Activated T-helper 2 cell treated with anti-CD3 and anti-CD28 coated beads, Interferon-gamma antibody, Interleukin-2, Interleukin-4, amounts not matched to agents 10 μg/mL and 5 μg/mL and 100 μg/mL, durations not matched to agents 14 hours and 24 hours and 36 hours (primary cell): ENCODE measurements at regions of chr3 and their contacts with region 1.

Region 1: GRCh38 chr3:189967254-189967865 is 153.3 kb downstream of the P3H2 start:
- DNase-seq: no peak
- H3K4me3 Mint-ChIP-seq: no peak overlapping the region
- H3K27ac Mint-ChIP-seq: no peak overlapping the region
- H3K4me1 Mint-ChIP-seq: peaks cover 6% of the 10 kb centered on the region
- H3K27me3 Mint-ChIP-seq: peaks cover 19% of the 10 kb centered on the region

Region 2: DNA sequence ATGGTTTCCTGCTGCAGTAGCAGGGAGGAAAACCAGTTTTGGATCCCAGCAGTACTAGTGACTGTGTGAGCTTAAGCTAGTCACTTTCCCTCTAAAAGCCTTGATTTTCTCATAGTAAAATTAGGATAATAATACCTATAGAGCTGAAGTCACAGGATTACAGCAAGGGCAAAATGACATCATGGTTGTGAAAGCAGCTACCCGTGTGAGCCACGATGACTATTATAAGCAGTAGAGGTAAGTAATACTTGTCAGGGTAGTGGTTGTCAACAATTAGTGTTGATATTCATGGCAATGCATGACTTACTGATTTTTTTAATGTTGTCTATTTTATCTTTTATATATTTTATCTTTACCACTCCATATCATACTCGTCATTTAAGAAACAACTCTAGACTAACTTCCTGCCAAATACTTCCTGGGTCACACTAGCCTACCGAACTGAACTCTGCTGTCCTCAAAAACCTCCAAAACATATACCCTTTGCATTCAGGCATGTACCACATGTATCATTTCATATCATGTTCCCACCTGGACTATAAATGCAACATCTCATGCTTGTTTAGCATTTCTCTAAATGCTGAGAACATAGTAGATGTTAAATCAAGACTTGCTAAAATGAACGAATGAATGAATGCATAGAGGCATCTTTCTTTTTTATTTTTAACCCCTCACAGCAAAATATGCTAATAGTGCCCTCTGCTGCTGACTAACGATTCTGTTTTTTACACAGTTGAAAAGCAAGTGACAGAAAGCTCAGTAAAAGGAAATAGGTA is 19.2 kb before region 1 on chr3:
- intact Hi-C with region 1: no loop called
- DNase-seq: no peak
- H3K4me3 Mint-ChIP-seq: no peak overlapping the region
- H3K27ac Mint-ChIP-seq: no peak overlapping the region
- H3K4me1 Mint-ChIP-seq: peaks cover 18% of the 10 kb centered on the region
- H3K27me3 Mint-ChIP-seq: peaks cover 10% of the 10 kb centered on the region

Region 3: DNA sequence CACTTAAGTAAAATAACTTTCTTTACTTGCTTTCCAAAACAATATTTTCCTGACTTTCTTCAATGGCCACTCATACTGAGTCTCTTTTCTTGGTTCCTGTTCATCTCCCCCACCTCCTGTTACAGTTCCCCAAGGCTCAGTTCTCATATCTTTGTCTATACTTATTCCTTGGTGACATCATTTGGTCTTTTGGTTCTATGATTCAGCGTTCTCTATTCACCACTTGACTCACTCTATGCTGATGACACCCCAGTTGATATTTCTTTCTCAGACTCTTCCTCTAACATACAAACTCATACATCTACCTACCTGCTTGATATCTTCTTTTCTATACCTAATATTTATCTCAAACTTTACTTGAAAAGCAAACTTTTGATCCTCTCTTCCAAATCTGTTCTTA is 238.4 kb after region 1 on chr3:
- intact Hi-C with region 1: loop called (anchors 2 kb)
- DNase-seq: no peak
- H3K4me3 Mint-ChIP-seq: no peak overlapping the region
- H3K27ac Mint-ChIP-seq: peak overlapping the region; percentile 31
- H3K4me1 Mint-ChIP-seq: peaks cover 11% of the 10 kb centered on the region
- H3K27me3 Mint-ChIP-seq: peaks cover 9% of the 10 kb centered on the region

Region 4: GRCh38 chr3:190424478-190425439 is 457.4 kb after region 1 on chr3:
- intact Hi-C with region 1: loop called (anchors 1 kb)
- DNase-seq: peak; percentile 28
- H3K4me3 Mint-ChIP-seq: no peak overlapping the region
- H3K27ac Mint-ChIP-seq: peak overlapping the region; percentile 38
- H3K4me1 Mint-ChIP-seq: peaks cover 6% of the 10 kb centered on the region
- H3K27me3 Mint-ChIP-seq: peaks cover 11% of the 10 kb centered on the region